ENCODE measurements at regions of chr3 and their contacts with region 1.

Region 1: DNA sequence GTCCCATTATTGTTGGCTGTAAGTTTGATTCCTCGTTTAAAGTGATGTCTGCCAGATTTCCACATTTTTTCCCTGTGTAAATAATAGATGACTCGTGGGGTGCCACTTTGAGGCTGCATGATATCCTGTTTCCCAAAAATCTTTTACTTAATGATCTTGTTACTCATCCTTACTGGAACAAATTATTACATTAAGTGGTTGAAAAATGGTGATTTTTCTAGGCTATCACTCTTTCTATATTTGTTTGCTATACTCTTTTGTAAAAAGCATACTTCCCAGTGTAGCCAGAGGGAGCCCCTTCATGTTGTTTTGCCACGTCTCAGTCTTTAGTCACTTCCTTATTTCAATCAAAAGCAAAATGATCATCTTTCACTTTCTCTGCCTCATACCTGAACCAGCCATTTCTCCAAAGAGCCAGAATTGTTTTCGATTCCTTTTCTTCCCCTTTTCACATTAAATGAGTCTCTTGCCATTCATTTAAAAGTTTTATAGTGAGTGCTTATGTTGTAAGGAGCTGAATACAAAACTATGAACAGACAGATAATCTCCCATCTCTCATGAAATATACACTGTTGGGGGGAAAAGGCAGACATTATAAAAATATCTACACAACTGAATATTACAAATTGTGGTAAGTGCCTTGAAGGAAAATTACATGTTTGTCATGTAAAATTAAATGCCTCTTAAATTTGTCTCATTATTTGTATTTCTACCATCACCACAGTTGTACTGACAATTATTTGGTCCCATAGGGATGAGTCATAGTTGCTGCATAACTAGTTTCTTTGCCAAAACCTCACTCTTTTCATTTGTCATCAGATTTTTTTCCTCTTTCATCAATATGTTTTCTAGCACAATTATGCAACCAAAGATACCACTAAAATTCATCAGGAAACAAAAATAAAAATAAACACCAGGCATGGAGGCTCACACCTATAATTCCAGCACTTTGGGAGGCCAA is 41.5 kb downstream of the ADGRG7 start:
- DNase-seq: no peak
- H3K4me3 Mint-ChIP-seq: peak overlapping the region; percentile 7
- H3K27ac Mint-ChIP-seq: peak overlapping the region; percentile 32
- H3K4me1 Mint-ChIP-seq: peaks cover 13% of the 10 kb centered on the region
- H3K27me3 Mint-ChIP-seq: no peaks in the 10 kb centered on the region

Region 2: GRCh38 chr3:100603469-100603868 is 47.5 kb before region 1 on chr3:
- intact Hi-C with region 1: loop called (anchors 5 kb)
- DNase-seq: no peak
- H3K4me3 Mint-ChIP-seq: peak overlapping the region; percentile 64
- H3K27ac Mint-ChIP-seq: peak overlapping the region; percentile 64
- H3K4me1 Mint-ChIP-seq: peaks cover 28% of the 10 kb centered on the region
- H3K27me3 Mint-ChIP-seq: peaks cover 7% of the 10 kb centered on the region

Region 3: DNA sequence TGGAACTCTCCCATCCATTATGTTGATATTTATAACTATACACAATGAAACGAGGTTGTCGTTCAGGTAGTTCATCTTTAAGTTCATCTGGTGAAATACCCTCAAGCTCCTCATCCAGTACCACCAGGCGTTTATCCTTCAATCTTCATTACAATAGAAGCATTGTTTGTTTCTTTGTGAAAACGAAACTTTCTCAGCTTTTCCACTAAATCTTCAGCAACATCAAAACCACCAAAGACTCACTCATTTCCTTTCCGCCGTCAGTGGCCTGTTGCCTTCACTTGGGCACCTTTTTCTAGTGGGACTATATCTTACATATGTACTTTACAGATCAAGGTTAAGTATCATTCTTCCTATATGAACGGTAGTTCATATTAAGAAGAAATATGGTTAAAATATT is 14.3 kb after region 1 on chr3:
- intact Hi-C with region 1: loop called (anchors 1 kb)
- DNase-seq: peak; percentile 36
- H3K4me3 Mint-ChIP-seq: peak overlapping the region; percentile 58
- H3K27ac Mint-ChIP-seq: peak overlapping the region; percentile 80
- H3K4me1 Mint-ChIP-seq: peaks cover 36% of the 10 kb centered on the region
- H3K27me3 Mint-ChIP-seq: peaks cover 3% of the 10 kb centered on the region

Region 4: DNA sequence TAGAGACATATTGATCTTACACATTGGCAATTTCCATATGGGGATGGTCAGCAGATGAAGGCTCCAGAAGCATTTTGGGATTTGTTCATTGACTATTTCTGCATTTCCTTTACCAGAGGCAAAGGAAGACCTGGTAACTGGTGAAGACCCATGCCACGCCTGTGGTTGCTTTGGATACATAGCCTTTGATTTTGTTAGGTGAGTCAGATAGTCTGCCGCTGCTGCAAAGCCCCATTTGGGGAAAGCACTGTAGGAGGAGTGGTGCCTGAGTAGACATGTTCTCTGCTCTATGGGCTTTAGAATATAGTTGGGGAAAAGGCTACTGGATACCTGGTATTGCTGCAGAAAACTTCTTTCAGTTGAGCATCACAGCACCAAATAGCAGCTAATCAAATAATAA is 115.1 kb after region 1 on chr3:
- intact Hi-C with region 1: no loop called
- DNase-seq: no peak
- H3K4me3 Mint-ChIP-seq: no peak overlapping the region
- H3K27ac Mint-ChIP-seq: no peak overlapping the region
- H3K4me1 Mint-ChIP-seq: peaks cover 9% of the 10 kb centered on the region
- H3K27me3 Mint-ChIP-seq: peaks cover 5% of the 10 kb centered on the region

Measured in activated T-helper 1 cell treated with anti-CD3 and anti-CD28 coated beads, Interleukin-12 subunit alpha, Interleukin-12 subunit beta, Interleukin-2, Interleukin-4 antibody, amounts not matched to agents 30 ng/mL and 10 ng/mL and 1 ng/mL, durations not matched to agents 14 hours and 24 hours and 36 hours (primary cell).